CD8-positive, alpha-beta T cell (primary cell): ENCODE measurements at regions of chr7 and their contacts with region 1.

Region 1: DNA sequence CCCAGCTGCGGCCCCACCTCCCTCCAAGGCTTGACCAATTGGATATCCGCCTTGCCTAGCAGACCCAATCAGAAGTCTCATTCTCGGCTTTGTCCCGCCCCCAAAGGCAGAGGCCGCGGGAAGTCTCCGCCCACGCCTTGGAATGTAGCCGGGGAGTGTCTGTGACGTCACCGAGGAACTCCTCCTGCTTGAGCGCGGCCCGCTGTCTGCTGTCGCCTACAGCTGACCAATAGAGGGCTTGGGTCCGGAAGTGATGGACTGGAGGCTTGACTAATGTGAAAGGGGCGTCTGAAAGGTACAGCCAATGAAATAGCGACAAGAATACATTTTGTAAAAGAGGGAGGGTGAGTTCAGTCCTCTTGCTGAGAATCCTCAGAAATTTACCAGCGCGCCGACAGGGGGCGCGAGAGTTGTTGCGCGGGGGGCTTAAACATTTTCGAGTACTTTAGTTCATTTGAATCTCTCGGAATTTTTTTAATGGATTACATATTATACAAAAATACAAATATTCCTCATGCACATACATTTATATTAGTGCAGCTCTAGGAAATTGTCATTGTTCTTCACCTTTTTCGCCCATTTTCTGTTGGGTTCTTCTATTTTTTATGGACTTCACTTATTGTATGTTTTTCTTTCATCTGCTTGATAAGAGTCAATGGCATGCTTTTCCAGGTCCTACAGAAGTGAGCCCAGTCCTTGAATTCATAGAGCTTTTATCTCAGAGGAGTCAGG is 376 bp upstream of the CREB3L2 start:
- DNase-seq: peak; percentile 96 to 100 (median 98)
- ATAC-seq: peak; percentile 88
- H3K4me3 ChIP-seq: peak overlapping the region; percentile 81 to 97
- H3K4me3 Mint-ChIP-seq: peak overlapping the region; percentile 90
- H3K27ac ChIP-seq: peak overlapping the region; percentile 72 to 85
- H3K27ac Mint-ChIP-seq: peak overlapping the region; percentile 91
- H3K4me1 ChIP-seq: peaks cover 11% of the 10 kb centered on the region
- H3K4me1 Mint-ChIP-seq: peaks cover 33% of the 10 kb centered on the region
- H3K27me3 ChIP-seq: no peaks in the 10 kb centered on the region
- H3K27me3 Mint-ChIP-seq: no peaks in the 10 kb centered on the region
- CTCF ChIP-seq: peak; percentile 96

Region 2: DNA sequence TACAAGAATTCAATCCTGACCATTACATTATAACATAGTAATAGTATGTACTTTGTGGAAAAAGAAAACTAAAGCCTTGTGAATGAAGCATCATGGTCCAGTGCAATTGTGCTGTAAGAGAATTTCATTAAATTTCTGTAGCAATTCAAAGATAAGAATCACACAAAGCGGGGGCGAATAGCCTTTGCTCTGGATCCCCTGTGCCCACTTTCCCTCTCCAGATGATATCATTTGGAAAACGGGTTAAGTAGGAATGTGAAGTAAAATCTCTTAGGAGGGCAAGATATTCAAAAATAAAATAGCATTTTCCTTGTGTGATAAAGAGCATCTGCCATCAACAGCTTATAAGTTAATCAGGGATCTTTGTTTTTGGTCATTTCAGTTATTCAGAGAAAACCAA is 956.7 kb before region 1 on chr7:
- CTCF ChIA-PET with region 1: no interaction called
- POLR2A ChIA-PET with region 1: no interaction called
- intact Hi-C with region 1: no loop called
- DNase-seq: no peak
- ATAC-seq: no peak
- H3K4me3 ChIP-seq: no peak overlapping the region
- H3K4me3 Mint-ChIP-seq: no peak overlapping the region
- H3K27ac ChIP-seq: no peak overlapping the region
- H3K27ac Mint-ChIP-seq: no peak overlapping the region
- H3K4me1 ChIP-seq: no peaks in the 10 kb centered on the region
- H3K4me1 Mint-ChIP-seq: no peaks in the 10 kb centered on the region
- H3K27me3 ChIP-seq: no peaks in the 10 kb centered on the region
- H3K27me3 Mint-ChIP-seq: no peaks in the 10 kb centered on the region
- CTCF ChIP-seq: no peak

Region 3: GRCh38 chr7:137934941-137935883 is 67.0 kb before region 1 on chr7:
- CTCF ChIA-PET with region 1: interaction called, 13 read pairs
- POLR2A ChIA-PET with region 1: no interaction called
- intact Hi-C with region 1: loop called (anchors 1 to 2 kb)
- DNase-seq: peak in 2 of 9 experiments; percentile 30 to 56
- ATAC-seq: peak; percentile 83
- H3K4me3 ChIP-seq: peak overlapping the region; percentile 39 to 49
- H3K4me3 Mint-ChIP-seq: peak overlapping the region; percentile 84
- H3K27ac ChIP-seq: peak overlapping the region; percentile 34 to 79
- H3K27ac Mint-ChIP-seq: peak overlapping the region; percentile 95
- H3K4me1 ChIP-seq: peaks cover 23% of the 10 kb centered on the region
- H3K4me1 Mint-ChIP-seq: peaks cover 43% of the 10 kb centered on the region
- H3K27me3 ChIP-seq: no peaks in the 10 kb centered on the region
- H3K27me3 Mint-ChIP-seq: no peaks in the 10 kb centered on the region
- CTCF ChIP-seq: no peak